Ovary (tissue), 10 donors: ENCODE measurements at regions of chr12 and their contacts with region 1.

Region 1: GRCh38 chr12:107884769-107885694 is 110.5 kb downstream of the ASCL4 start:
- DNase-seq: no peak
- H3K4me3 ChIP-seq: no peak overlapping the region
- H3K27ac ChIP-seq: no peak overlapping the region
- H3K4me1 ChIP-seq: no peaks in the 10 kb centered on the region
- H3K27me3 ChIP-seq: no peaks in the 10 kb centered on the region
- CTCF ChIP-seq: no peak
- EP300 ChIP-seq: no peak
- POLR2A ChIP-seq: no peak

Region 2: DNA sequence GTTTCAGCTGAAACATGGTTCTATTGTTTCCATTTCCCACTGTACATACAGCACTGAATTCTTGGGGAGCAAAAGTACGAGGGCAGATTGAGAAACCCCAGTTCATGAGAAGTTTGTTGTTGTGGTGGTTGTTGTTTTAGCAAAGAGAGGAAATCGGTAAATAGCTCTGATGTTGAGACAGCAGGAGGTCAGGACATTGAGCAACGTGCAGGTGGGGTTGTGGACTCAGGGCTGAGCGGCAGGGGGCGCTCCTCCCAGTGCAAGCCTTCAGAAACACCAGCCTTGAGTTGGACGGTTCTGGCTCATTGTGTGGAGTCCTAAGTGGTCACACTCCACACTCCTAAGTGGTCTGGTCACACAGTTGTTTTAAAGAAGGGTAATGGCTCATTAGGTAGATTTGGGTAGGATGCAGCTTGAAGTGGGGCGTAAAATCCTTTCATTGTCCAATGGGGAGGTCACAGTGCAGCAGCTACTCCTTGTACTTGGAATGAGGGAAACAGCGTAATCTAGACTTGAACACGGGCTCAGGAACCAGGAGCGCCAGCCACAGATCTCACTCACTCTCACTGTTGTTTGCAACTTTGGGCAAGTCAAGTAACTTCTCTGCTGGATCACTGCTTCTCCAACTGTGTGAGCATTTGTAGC is 213.9 kb before region 1 on chr12:
- intact Hi-C with region 1: loop called in 1 of 4 experiments (anchors 10 kb)
- DNase-seq: no peak
- H3K4me3 ChIP-seq: no peak overlapping the region
- H3K27ac ChIP-seq: no peak overlapping the region
- H3K4me1 ChIP-seq: no peaks in the 10 kb centered on the region
- H3K27me3 ChIP-seq: no peaks in the 10 kb centered on the region
- CTCF ChIP-seq: no peak
- EP300 ChIP-seq: no peak
- POLR2A ChIP-seq: no peak